Activated CD4-positive, alpha-beta T cell treated with anti-CD3 and anti-CD28 coated beads for 36 hours (primary cell): ENCODE measurements at regions of chr19 and their contacts with region 1.

Region 1: DNA sequence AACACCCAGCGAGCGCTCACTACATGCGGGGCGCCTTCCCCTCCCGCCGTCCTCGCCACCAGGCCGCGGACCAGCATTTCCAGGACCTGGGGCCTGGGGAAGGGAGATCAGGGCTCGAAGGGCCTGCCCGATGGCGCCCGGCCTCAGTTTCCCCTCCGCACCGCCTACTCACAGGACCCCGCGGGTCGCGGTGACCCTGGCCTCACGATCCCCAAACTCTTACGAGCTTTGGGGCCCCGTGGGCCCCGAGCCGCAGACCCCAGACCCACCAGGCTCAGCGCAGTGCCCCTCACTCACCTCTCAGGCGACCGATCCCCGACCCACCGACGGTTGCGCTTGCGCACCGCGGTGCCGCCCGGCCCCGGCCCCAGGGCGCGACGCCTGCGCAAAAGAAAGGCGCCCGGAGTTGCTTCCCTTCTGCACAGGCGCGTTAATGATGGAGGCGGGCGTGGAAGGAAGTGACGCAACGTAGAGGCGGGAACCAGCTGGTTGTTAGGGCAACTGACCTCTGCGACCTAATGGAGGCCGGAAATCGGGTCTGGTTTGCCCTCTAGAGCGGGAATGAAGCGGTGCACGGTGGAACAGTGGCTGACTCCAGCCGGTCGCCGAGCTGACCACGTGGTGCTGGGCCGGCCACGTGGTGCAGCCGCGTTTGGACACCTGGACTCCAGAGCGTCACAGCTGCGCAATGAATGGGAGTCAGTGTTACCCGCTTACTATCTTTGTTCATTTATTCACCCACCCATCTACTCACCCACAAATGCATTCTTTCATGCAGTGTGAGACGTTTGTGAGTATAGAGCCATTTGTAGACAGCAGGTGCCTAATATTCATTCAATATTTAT is at the start of gene SGTA:
- DNase-seq: peak; percentile 98
- ATAC-seq: peak; percentile 84
- H3K4me3 Mint-ChIP-seq: peak within 1 kb of the TSS; percentile 91
- H3K27ac Mint-ChIP-seq: peak within 1 kb of the TSS; percentile 98
- H3K4me1 Mint-ChIP-seq: peaks cover 58% of the 10 kb centered on the region
- H3K27me3 Mint-ChIP-seq: no peaks in the 10 kb centered on the region
- total RNA-seq, gene SGTA: 53.0 to 62.2 TPM

Region 2: GRCh38 chr19:1825909-1826556 is 957.1 kb before region 1 on chr19:
- CTCF ChIA-PET with region 1: no interaction called
- POLR2A ChIA-PET with region 1: no interaction called
- intact Hi-C with region 1: no loop called
- DNase-seq: peak; percentile 86
- ATAC-seq: peak; percentile 90
- H3K4me3 Mint-ChIP-seq: no peak overlapping the region
- H3K27ac Mint-ChIP-seq: no peak overlapping the region
- H3K4me1 Mint-ChIP-seq: no peaks in the 10 kb centered on the region
- H3K27me3 Mint-ChIP-seq: no peaks in the 10 kb centered on the region

Region 3: GRCh38 chr19:1942078-1942933 is 840.9 kb before region 1 on chr19:
- CTCF ChIA-PET with region 1: no interaction called
- POLR2A ChIA-PET with region 1: no interaction called
- intact Hi-C with region 1: loop called in 1 of 2 experiments (anchors 2 kb)
- DNase-seq: peak; percentile 85
- ATAC-seq: peak; percentile 50
- H3K4me3 Mint-ChIP-seq: peak overlapping the region; percentile 93
- H3K27ac Mint-ChIP-seq: peak overlapping the region; percentile 88
- H3K4me1 Mint-ChIP-seq: peaks cover 30% of the 10 kb centered on the region
- H3K27me3 Mint-ChIP-seq: no peaks in the 10 kb centered on the region

Region 4: GRCh38 chr19:2455851-2456570 is 327.1 kb before region 1 on chr19:
- CTCF ChIA-PET with region 1: no interaction called
- POLR2A ChIA-PET with region 1: no interaction called
- intact Hi-C with region 1: loop called in 1 of 2 experiments (anchors 1 kb)
- DNase-seq: peak; percentile 73
- ATAC-seq: peak; percentile 47
- H3K4me3 Mint-ChIP-seq: peak overlapping the region; percentile 84
- H3K27ac Mint-ChIP-seq: peak overlapping the region; percentile 88
- H3K4me1 Mint-ChIP-seq: peaks cover 16% of the 10 kb centered on the region
- H3K27me3 Mint-ChIP-seq: no peaks in the 10 kb centered on the region

Region 5: DNA sequence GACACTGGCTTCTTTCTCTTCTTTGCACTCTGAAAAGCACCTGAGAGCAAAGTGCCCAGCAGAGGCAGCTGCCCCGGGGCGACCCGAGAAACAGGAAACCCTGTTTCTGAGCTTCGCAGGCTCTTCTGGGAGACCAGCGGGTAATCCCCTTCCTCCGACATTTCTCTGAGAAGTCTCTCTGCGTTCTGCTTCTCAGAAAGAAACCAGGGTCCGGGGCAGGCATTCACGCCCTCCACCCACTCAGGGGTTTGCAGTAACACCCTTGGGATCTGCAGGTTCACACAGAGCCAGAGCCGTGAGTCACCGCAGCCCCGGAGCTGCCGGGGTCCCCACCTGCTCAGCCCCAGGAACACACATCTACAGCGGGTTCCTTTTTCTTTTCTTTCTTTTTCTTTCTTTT is 221.3 kb before region 1 on chr19:
- CTCF ChIA-PET with region 1: no interaction called
- POLR2A ChIA-PET with region 1: no interaction called
- intact Hi-C with region 1: no loop called
- DNase-seq: peak; percentile 88
- ATAC-seq: peak; percentile 92
- H3K4me3 Mint-ChIP-seq: peak overlapping the region; percentile 69
- H3K27ac Mint-ChIP-seq: peak overlapping the region; percentile 85
- H3K4me1 Mint-ChIP-seq: peaks cover 23% of the 10 kb centered on the region
- H3K27me3 Mint-ChIP-seq: peaks cover 2% of the 10 kb centered on the region

Region 6: DNA sequence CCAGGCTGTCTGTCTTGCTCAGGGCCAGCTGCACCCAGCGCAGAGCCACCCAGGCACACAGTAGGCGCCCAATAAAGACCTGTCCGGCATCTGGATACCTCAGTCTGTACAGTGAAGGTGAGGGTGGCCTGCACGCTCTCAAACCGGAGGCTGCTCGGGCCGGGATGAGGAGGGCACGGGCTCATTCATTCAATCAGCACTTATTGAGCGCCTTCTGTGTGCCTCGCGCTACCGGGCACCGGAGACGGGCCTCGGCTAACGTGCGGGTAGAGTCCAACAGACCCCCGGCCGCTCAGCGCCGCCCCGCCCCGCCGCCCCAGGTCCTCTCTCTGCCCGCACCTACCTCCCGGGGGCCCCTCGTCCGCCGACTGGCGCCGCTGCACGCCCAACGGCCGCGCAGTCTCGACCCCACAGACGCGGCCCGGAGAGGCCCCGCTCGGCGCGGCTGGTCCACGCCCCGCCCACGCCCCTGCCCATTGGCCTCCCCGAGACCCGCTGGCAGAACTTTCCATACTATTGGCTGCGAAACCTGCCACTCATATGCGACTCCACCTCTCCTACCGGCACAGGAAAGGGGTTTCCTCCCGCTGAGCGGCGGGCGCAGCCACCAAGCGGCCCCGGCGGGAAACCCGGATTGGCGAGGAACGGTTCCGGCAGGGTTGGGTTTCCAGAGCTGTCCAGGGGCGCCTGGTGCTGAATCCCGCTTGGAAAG is 43.4 kb before region 1 on chr19 and contains the start of gene SLC39A3:
- CTCF ChIA-PET with region 1: interaction called, 3 read pairs
- POLR2A ChIA-PET with region 1: no interaction called
- intact Hi-C with region 1: loop called in 1 of 2 experiments (anchors 1 kb)
- DNase-seq: peak; percentile 99
- ATAC-seq: peak; percentile 100
- H3K4me3 Mint-ChIP-seq: peak within 1 kb of the TSS; percentile 95
- H3K27ac Mint-ChIP-seq: peak within 1 kb of the TSS; percentile 70
- H3K4me1 Mint-ChIP-seq: peaks cover 14% of the 10 kb centered on the region
- H3K27me3 Mint-ChIP-seq: peaks cover 8% of the 10 kb centered on the region
- total RNA-seq, gene SLC39A3: 26.6 to 46.0 TPM

Region 7: GRCh38 chr19:2944775-2945574 is 161.8 kb after region 1 on chr19 and contains the start of gene ZNF77:
- CTCF ChIA-PET with region 1: no interaction called
- POLR2A ChIA-PET with region 1: no interaction called
- intact Hi-C with region 1: loop called in 1 of 2 experiments (anchors 1 kb)
- DNase-seq: peak; percentile 99
- ATAC-seq: peak; percentile 100
- H3K4me3 Mint-ChIP-seq: peak within 1 kb of the TSS; percentile 83
- H3K27ac Mint-ChIP-seq: peak within 1 kb of the TSS; percentile 97
- H3K4me1 Mint-ChIP-seq: peaks cover 34% of the 10 kb centered on the region
- H3K27me3 Mint-ChIP-seq: no peaks in the 10 kb centered on the region
- total RNA-seq, gene ZNF77: 4.3 to 4.8 TPM

Region 8: GRCh38 chr19:3360421-3361383 is 577.5 kb after region 1 on chr19:
- CTCF ChIA-PET with region 1: no interaction called
- POLR2A ChIA-PET with region 1: no interaction called
- intact Hi-C with region 1: loop called in 1 of 2 experiments (anchors 2 kb)
- DNase-seq: peak; percentile 81
- ATAC-seq: peak; percentile 57
- H3K4me3 Mint-ChIP-seq: peak overlapping the region; percentile 86
- H3K27ac Mint-ChIP-seq: peak overlapping the region; percentile 86
- H3K4me1 Mint-ChIP-seq: peaks cover 37% of the 10 kb centered on the region
- H3K27me3 Mint-ChIP-seq: peaks cover 11% of the 10 kb centered on the region